ENCODE measurements at regions of chr1 and their contacts with region 1.

Region 1: GRCh38 chr1:154419620-154420571 is 14.8 kb downstream of the IL6R start:
- DNase-seq: peak; percentile 96
- H3K4me3 ChIP-seq: no peak overlapping the region
- H3K27ac ChIP-seq: peak overlapping the region; percentile 89
- H3K4me1 ChIP-seq: peaks cover 43% of the 10 kb centered on the region
- H3K27me3 ChIP-seq: no peaks in the 10 kb centered on the region
- CTCF ChIP-seq: no peak
- POLR2A ChIP-seq: no peak

Region 2: DNA sequence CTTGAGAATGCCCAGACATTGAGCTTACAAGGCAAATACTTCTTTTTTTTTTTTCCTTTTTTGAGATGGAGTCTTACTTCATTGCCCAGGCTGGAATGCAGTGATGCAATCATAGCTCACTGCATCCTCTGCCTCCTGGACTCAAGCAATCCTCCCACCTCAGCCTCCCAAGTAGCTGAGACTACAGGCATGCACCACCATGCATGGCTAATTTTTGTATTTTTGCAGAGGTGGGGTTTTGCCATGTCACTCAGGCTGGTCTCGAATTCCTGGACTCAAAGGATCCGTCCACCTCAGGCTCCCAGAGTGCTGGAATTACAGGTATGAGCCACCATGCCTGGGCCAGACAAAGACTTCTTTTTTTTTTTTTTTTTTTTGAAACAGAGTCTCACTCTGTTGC is 344.1 kb before region 1 on chr1:
- CTCF ChIA-PET with region 1: no interaction called
- POLR2A ChIA-PET with region 1: no interaction called
- dilution Hi-C with region 1: no loop called
- intact Hi-C with region 1: no loop called
- DNase-seq: no peak
- H3K4me3 ChIP-seq: no peak overlapping the region
- H3K27ac ChIP-seq: no peak overlapping the region
- H3K4me1 ChIP-seq: no peaks in the 10 kb centered on the region
- H3K27me3 ChIP-seq: no peaks in the 10 kb centered on the region
- CTCF ChIP-seq: no peak
- POLR2A ChIP-seq: no peak

Region 3: GRCh38 chr1:154442006-154442740 is 22.3 kb after region 1 on chr1:
- CTCF ChIA-PET with region 1: interaction called, 16 read pairs
- POLR2A ChIA-PET with region 1: no interaction called
- dilution Hi-C with region 1: no loop called
- intact Hi-C with region 1: no loop called
- DNase-seq: no peak
- H3K4me3 ChIP-seq: no peak overlapping the region
- H3K27ac ChIP-seq: no peak overlapping the region
- H3K4me1 ChIP-seq: peaks cover 7% of the 10 kb centered on the region
- H3K27me3 ChIP-seq: no peaks in the 10 kb centered on the region
- CTCF ChIP-seq: peak; percentile 24 to 56
- POLR2A ChIP-seq: no peak

Region 4: GRCh38 chr1:154463512-154463990 is 43.7 kb after region 1 on chr1:
- CTCF ChIA-PET with region 1: interaction called, 3 read pairs
- POLR2A ChIA-PET with region 1: no interaction called
- dilution Hi-C with region 1: no loop called
- intact Hi-C with region 1: loop called (anchors 5 kb)
- DNase-seq: peak; percentile 31
- H3K4me3 ChIP-seq: no peak overlapping the region
- H3K27ac ChIP-seq: peak overlapping the region; percentile 34
- H3K4me1 ChIP-seq: peaks cover 8% of the 10 kb centered on the region
- H3K27me3 ChIP-seq: no peaks in the 10 kb centered on the region
- CTCF ChIP-seq: no peak
- POLR2A ChIP-seq: no peak

Region 5: DNA sequence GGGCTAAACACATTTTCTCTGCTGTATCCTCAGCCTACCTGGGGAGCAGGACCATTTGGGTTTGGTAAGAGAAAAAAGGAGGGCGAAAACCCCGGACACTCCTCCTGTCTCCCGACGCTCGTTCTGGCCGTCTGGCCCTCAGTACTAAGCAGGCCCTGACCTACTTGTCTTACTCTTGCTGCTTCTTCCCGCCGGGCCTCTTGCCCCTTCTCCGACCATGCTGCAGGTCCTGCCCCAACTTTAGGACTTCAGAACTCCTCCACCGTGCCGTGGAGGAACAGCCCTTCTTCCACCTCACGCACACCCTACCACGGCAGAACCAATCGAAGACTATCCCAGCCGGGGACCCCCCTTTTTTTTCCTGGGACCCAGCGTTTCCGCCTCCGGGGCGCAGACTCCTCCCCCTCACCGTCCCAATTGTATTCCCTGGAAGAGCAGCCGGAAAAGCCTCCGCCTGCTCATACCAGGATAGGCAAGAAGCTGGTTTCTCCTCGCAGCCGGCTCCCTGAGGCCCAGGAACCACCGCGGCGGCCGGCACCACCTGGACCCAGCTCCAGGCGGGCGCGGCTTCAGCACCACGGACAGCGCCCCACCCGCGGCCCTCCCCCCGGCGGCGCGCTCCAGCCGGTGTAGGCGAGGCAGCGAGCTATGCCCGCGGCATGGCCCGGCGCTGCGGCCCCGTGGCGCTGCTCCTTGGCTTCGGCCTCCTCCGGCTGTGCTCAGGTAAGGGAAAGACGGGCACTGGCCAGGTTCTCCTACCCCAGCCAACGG is 147.7 kb after region 1 on chr1 and contains the start of gene CHRNB2:
- CTCF ChIA-PET with region 1: no interaction called
- POLR2A ChIA-PET with region 1: no interaction called
- dilution Hi-C with region 1: no loop called
- intact Hi-C with region 1: no loop called
- DNase-seq: peak; percentile 35
- H3K4me3 ChIP-seq: no peak within 1 kb of the TSS
- H3K27ac ChIP-seq: no peak within 1 kb of the TSS
- H3K4me1 ChIP-seq: no peaks in the 10 kb centered on the region
- H3K27me3 ChIP-seq: peaks cover 13 to 24% of the 10 kb centered on the region in 2 experiments
- CTCF ChIP-seq: no peak
- POLR2A ChIP-seq: no peak
- total RNA-seq, gene CHRNB2: not detected in 2 replicates

Measured in endothelial cell of umbilical vein (primary cell).